ENCODE measurements at regions of chr2 and their contacts with region 1.

Region 1: GRCh38 chr2:38115216-38116032 is 39.5 kb upstream of the CYP1B1 start:
- DNase-seq: peak; percentile 55
- ATAC-seq: peak; percentile 96
- H3K4me3 ChIP-seq: no peak overlapping the region
- H3K27ac ChIP-seq: no peak overlapping the region; the same call in 1 of the 2 replicates
- H3K4me1 ChIP-seq: peaks cover 9% of the 10 kb centered on the region
- H3K27me3 ChIP-seq: no peaks in the 10 kb centered on the region
- CTCF ChIP-seq: peak; percentile 91 to 97 (median 96)
- EP300 ChIP-seq: no peak
- POLR2A ChIP-seq: no peak
- RAD21 ChIP-seq: peak; percentile 98

Region 2: DNA sequence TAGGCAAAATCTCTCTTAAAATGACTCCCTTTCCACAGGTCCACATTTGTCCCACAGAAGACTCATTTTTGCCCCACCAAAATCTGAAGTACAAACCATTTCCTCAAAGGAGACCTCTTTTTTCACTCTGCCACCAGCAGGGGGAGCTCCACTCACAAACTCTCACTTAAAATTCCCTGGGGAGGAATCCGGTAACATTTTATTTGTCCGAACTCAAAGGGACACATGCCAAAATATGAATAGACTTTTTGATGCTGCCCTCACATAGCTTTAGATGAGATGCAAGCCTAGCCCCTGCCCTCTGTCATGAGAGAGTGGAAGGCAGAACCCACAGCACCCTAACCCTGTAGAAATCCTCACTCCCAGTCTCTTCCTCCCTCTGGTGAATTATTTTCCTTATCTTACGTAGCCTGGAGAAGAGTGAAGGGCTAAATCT is 133.3 kb before region 1 on chr2:
- CTCF ChIA-PET with region 1: interaction called, 13 read pairs
- POLR2A ChIA-PET with region 1: no interaction called
- RAD21 ChIA-PET with region 1: interaction called, 4 read pairs
- SMC1A ChIA-PET with region 1: interaction called, 6 read pairs
- in situ Hi-C with region 1: no loop called
- intact Hi-C with region 1: loop called (anchors 1 kb)
- DNase-seq: peak; percentile 30
- ATAC-seq: peak; percentile 61
- H3K4me3 ChIP-seq: no peak overlapping the region
- H3K27ac ChIP-seq: no peak overlapping the region
- H3K4me1 ChIP-seq: no peaks in the 10 kb centered on the region
- H3K27me3 ChIP-seq: no peaks in the 10 kb centered on the region
- CTCF ChIP-seq: peak; percentile 61 to 76 (median 70)
- EP300 ChIP-seq: no peak
- POLR2A ChIP-seq: no peak
- RAD21 ChIP-seq: peak; percentile 64

Region 3: GRCh38 chr2:38178547-38179419 is 63.4 kb after region 1 on chr2:
- CTCF ChIA-PET with region 1: no interaction called
- POLR2A ChIA-PET with region 1: no interaction called
- RAD21 ChIA-PET with region 1: no interaction called
- SMC1A ChIA-PET with region 1: interaction called, 3 read pairs
- in situ Hi-C with region 1: no loop called
- intact Hi-C with region 1: loop called (anchors 5 kb)
- DNase-seq: peak; percentile 68
- ATAC-seq: peak; percentile 93
- H3K4me3 ChIP-seq: no peak overlapping the region
- H3K27ac ChIP-seq: peak overlapping the region; percentile 44
- H3K4me1 ChIP-seq: peaks cover 16% of the 10 kb centered on the region
- H3K27me3 ChIP-seq: no peaks in the 10 kb centered on the region
- CTCF ChIP-seq: no peak
- EP300 ChIP-seq: peak in 1 of 2 experiments; percentile 56; a peak in 1 of 4 replicates
- POLR2A ChIP-seq: no peak
- RAD21 ChIP-seq: no peak

Region 4: DNA sequence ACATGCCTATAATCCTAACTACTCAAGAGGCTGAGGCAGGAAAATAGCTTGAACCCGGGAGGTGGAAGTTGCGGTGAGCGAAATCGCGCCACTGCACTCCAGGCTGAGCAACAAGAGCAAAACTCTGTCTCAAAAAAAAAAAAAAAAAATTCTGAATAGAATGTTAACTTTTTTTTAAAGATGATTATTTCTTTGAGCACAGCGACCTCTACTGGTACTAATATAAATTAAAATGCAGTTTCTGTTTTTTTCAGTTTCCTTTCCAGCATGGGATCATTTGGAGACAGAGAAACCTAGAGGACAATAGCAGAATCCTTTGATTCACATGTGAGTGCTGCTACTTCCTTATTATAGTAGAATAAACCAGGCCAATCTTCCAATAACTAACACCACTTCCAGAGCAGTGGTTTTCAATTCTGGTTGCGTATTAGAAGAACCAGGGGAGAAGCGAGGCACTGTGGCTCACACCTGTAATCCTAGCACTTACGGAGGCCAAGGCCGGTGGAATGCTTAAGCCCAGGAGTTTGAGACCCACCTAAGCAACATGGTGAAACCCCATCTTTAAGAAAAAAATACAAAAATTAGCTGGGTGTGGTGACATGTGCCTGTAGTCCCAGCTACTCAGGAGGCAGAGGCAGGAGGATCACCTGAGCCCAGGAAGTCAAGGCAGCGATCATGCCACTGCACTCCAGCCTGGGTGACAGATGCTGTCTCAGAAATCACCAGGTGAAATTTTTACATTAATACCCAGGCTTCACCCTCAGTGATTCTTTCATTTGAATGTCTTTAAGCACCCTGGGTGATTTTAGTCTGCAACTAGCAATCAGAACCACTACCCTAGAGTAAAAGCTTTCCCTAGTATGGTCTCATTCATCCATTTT is 625.7 kb after region 1 on chr2:
- CTCF ChIA-PET with region 1: no interaction called
- POLR2A ChIA-PET with region 1: no interaction called
- RAD21 ChIA-PET with region 1: no interaction called
- SMC1A ChIA-PET with region 1: no interaction called
- in situ Hi-C with region 1: no loop called
- intact Hi-C with region 1: no loop called
- DNase-seq: no peak
- ATAC-seq: peak; percentile 10
- H3K4me3 ChIP-seq: no peak overlapping the region
- H3K27ac ChIP-seq: no peak overlapping the region
- H3K4me1 ChIP-seq: no peaks in the 10 kb centered on the region
- H3K27me3 ChIP-seq: no peaks in the 10 kb centered on the region
- CTCF ChIP-seq: peak in 2 of 3 experiments; percentile 40 to 41; a peak in 4 of 6 replicates
- EP300 ChIP-seq: no peak
- POLR2A ChIP-seq: no peak; the same call in 1 of the 2 replicates
- RAD21 ChIP-seq: peak; percentile 41